ENCODE measurements at regions of chr2 and their contacts with region 1.

Region 1: GRCh38 chr2:226791487-226792081 is 8.0 kb downstream of the IRS1 start:
- DNase-seq: peak; percentile 82
- H3K4me3 ChIP-seq: peak overlapping the region; percentile 82 to 92 (median 85)
- H3K27ac ChIP-seq: peak overlapping the region; percentile 87
- H3K4me1 ChIP-seq: peaks cover 32% of the 10 kb centered on the region
- H3K27me3 ChIP-seq: no peaks in the 10 kb centered on the region
- CTCF ChIP-seq: peak in 1 of 2 donors; percentile 31

Region 2: DNA sequence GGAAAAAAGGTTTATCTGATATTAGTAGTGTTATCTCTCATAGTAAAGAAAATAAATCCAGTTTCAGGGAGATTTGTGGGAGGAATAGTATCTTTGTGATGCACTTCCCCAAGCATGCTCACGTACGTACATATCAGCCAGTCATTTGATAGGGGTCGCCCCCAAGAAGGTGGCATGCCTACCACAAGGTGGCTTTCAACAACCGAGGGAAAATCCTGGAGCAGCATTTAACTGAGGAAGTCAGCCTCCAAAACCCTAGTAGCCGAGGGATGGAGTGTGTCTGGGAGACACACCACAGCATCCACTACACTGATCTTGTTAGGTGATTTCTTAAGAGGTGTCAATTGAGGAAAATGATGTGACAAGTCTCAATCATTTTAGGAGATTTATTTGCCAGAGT is 768.2 kb before region 1 on chr2:
- CTCF ChIA-PET with region 1: no interaction called
- dilution Hi-C with region 1: no loop called
- in situ Hi-C with region 1: no loop called
- intact Hi-C with region 1: loop called (anchors 10 kb)
- DNase-seq: no peak
- H3K4me3 ChIP-seq: no peak overlapping the region
- H3K27ac ChIP-seq: no peak overlapping the region
- H3K4me1 ChIP-seq: no peaks in the 10 kb centered on the region
- H3K27me3 ChIP-seq: no peaks in the 10 kb centered on the region
- CTCF ChIP-seq: no peak

Region 3: GRCh38 chr2:226431288-226431948 is 360.2 kb before region 1 on chr2:
- CTCF ChIA-PET with region 1: interaction called, 3 read pairs
- dilution Hi-C with region 1: no loop called
- in situ Hi-C with region 1: loop called in 1 of 2 experiments (anchors 10 kb)
- intact Hi-C with region 1: loop called (anchors 1 kb)
- DNase-seq: no peak
- H3K4me3 ChIP-seq: no peak overlapping the region
- H3K27ac ChIP-seq: no peak overlapping the region
- H3K4me1 ChIP-seq: peaks cover 30% of the 10 kb centered on the region
- H3K27me3 ChIP-seq: no peaks in the 10 kb centered on the region
- CTCF ChIP-seq: no peak

Region 4: GRCh38 chr2:226514939-226515338 is 276.6 kb before region 1 on chr2:
- CTCF ChIA-PET with region 1: no interaction called
- dilution Hi-C with region 1: no loop called
- in situ Hi-C with region 1: no loop called
- intact Hi-C with region 1: loop called (anchors 10 kb)
- DNase-seq: peak; percentile 84
- H3K4me3 ChIP-seq: no peak overlapping the region
- H3K27ac ChIP-seq: peak overlapping the region; percentile 86
- H3K4me1 ChIP-seq: peaks cover 14% of the 10 kb centered on the region
- H3K27me3 ChIP-seq: no peaks in the 10 kb centered on the region
- CTCF ChIP-seq: no peak

Region 5: DNA sequence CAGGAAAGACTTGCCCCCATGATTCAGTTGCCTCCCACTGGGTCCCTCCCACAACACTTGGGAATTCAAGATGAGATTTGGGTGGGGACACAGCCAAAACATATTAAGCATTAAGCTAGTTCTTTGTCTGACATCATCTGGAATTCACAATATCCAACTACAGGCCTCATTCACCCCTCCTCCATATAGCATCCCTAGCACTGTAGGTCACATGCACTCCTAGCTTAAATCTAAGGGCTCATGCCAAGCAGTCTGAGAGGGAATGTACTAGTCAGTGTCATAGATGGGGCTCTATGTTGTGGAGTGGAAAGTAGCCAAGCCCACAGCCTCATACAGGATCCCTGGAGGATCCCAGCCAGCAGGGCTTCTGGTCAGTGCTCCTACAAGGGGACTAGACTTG is 84.1 kb before region 1 on chr2:
- CTCF ChIA-PET with region 1: no interaction called
- dilution Hi-C with region 1: no loop called
- in situ Hi-C with region 1: no loop called
- intact Hi-C with region 1: no loop called
- DNase-seq: no peak
- H3K4me3 ChIP-seq: no peak overlapping the region
- H3K27ac ChIP-seq: no peak overlapping the region
- H3K4me1 ChIP-seq: no peaks in the 10 kb centered on the region
- H3K27me3 ChIP-seq: no peaks in the 10 kb centered on the region
- CTCF ChIP-seq: no peak